ENCODE measurements at regions of chr5 and their contacts with region 1.

Region 1: DNA sequence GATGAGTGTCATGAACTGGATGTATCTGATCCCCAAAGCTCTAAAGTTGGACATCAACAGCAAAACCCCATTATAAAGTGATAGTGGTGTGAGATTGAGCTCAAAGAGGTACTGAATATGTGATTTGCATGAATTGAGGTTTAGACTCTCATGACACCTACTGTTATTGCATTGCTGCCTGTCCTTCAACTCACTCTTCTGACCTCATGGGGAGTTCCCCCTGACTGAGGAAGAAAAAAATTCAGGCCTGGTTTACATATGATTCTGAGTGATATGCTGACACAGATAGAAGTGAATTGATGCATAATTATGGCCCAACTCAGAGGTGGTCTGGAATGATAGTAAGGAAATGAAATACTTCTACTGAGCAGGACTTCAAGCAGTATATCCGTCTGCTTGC is 76.2 kb upstream of the CHD1 start:
- DNase-seq: peak; percentile 34
- ATAC-seq: peak; percentile 100
- H3K4me3 Mint-ChIP-seq: no peak overlapping the region
- H3K27ac Mint-ChIP-seq: no peak overlapping the region
- H3K4me1 Mint-ChIP-seq: peaks cover 14% of the 10 kb centered on the region
- H3K27me3 Mint-ChIP-seq: no peaks in the 10 kb centered on the region

Region 2: DNA sequence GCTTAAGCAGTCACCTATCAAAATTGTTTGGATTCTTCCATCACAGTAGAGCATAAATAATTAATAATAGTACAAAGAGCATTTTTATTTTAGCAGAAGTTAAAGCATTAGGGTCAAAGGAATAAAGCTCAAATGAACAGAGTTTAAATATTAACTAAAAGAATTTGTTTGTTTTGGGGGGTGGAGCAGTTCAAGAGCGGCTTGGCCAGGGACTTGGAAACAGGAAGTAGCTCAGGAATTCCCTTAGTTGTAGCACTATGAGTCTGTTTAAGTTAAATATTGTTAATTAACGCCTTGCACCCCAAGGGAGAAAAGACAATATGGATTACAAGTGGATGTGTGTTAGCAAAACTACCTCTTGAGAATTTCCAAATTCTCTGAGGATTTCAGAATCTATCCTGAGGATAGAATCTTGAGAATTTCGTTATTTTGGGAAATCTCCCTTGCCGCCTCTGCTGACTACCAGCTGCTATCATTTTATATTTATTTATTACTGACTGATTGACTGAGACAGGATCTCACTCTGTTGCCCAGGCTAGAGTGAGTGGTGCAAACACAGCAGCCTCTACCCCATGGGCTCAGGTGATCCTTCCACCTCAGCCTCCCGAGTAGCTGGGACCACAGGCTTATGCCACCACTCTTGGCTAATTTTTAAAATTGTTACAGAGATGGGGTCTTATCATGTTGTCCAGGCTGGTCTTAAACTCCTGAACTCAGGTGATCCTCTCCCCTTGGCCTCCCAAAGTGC is 20.5 kb after region 1 on chr5:
- CTCF ChIA-PET with region 1: interaction called, 3 read pairs
- POLR2A ChIA-PET with region 1: no interaction called
- intact Hi-C with region 1: loop called (anchors 2 kb)
- DNase-seq: no peak
- ATAC-seq: no peak
- H3K4me3 Mint-ChIP-seq: no peak overlapping the region
- H3K27ac Mint-ChIP-seq: no peak overlapping the region
- H3K4me1 Mint-ChIP-seq: peaks cover 34% of the 10 kb centered on the region
- H3K27me3 Mint-ChIP-seq: no peaks in the 10 kb centered on the region

Measured in activated CD4-positive, alpha-beta T cell treated with anti-CD3 and anti-CD28 coated beads for 36 hours (primary cell).